MCF 10A (cell line): ENCODE measurements at regions of chr4 and their contacts with region 1.

Region 1: GRCh38 chr4:72701987-72702819 is 133.2 kb upstream of the ADAMTS3 start:
- DNase-seq: peak; percentile 75
- H3K4me3 Mint-ChIP-seq: peak overlapping the region; percentile 78
- H3K27ac Mint-ChIP-seq: peak overlapping the region; percentile 49
- H3K4me1 Mint-ChIP-seq: no peaks in the 10 kb centered on the region
- H3K27me3 Mint-ChIP-seq: no peaks in the 10 kb centered on the region
- CTCF ChIP-seq: peak; percentile 60

Region 2: GRCh38 chr4:72505314-72505744 is 196.9 kb before region 1 on chr4:
- CTCF ChIA-PET with region 1: interaction called, 7 read pairs
- POLR2A ChIA-PET with region 1: no interaction called
- intact Hi-C with region 1: loop called (anchors 1 kb)
- DNase-seq: peak; percentile 68
- H3K4me3 Mint-ChIP-seq: no peak overlapping the region
- H3K27ac Mint-ChIP-seq: no peak overlapping the region
- H3K4me1 Mint-ChIP-seq: peaks cover 5% of the 10 kb centered on the region
- H3K27me3 Mint-ChIP-seq: no peaks in the 10 kb centered on the region
- CTCF ChIP-seq: peak; percentile 71

Region 3: GRCh38 chr4:72886602-72887001 is 184.4 kb after region 1 on chr4:
- CTCF ChIA-PET with region 1: interaction called, 6 read pairs
- POLR2A ChIA-PET with region 1: interaction called, 4 read pairs
- intact Hi-C with region 1: loop called (anchors 1 kb)
- DNase-seq: peak; percentile 32
- H3K4me3 Mint-ChIP-seq: no peak overlapping the region
- H3K27ac Mint-ChIP-seq: no peak overlapping the region
- H3K4me1 Mint-ChIP-seq: no peaks in the 10 kb centered on the region
- H3K27me3 Mint-ChIP-seq: no peaks in the 10 kb centered on the region
- CTCF ChIP-seq: peak; percentile 50

Region 4: DNA sequence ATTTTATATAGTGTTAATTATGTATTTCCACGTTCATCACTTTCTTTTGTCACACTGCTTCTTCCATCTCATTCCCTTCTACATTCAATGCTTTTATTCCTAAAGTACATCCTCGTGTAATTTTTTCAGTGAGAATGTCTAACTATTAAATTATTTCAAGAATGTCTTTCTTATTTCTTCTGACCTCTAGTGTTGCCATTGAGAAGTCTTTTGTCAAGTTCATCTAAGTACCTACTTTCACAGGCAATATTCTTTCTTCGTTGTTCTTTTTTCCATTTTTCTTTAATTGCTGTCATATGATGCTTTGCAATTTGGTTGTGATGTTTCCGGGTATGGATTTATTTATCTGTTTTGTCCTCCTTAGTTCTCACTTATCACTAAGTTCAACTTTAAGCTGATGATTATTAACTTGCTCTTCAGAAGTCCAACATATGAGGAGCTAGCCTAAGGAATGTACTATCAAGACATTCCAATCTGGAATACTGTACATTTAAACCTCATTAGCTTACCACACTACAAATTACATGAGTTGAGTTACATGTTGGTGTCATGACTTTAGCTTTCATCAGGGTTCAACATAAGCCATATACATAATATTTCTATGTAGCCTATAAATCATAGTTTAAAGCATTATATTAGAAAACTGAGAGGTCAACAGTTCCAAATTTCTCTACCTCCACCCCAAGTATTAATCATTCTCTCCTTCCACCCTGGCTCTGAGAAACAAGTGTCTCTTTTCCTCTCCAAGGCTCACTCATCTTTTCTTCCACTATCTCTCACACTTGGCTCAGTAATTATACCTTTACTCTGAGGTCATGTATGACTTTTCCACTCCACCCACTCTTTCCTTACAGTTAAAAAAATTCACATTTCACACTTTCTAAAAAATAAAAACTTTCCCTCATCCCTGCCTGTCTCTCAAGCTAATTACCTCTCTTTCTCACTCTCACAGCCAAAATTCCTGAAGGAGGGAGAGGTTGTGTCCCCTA is 285.8 kb after region 1 on chr4:
- CTCF ChIA-PET with region 1: no interaction called
- POLR2A ChIA-PET with region 1: no interaction called
- intact Hi-C with region 1: loop called (anchors 1 kb)
- DNase-seq: no peak
- H3K4me3 Mint-ChIP-seq: no peak overlapping the region
- H3K27ac Mint-ChIP-seq: no peak overlapping the region
- H3K4me1 Mint-ChIP-seq: no peaks in the 10 kb centered on the region
- H3K27me3 Mint-ChIP-seq: no peaks in the 10 kb centered on the region
- CTCF ChIP-seq: no peak